Naive thymus-derived CD4-positive, alpha-beta T cell (primary cell): ENCODE measurements at regions of chr9 and their contacts with region 1.

Region 1: DNA sequence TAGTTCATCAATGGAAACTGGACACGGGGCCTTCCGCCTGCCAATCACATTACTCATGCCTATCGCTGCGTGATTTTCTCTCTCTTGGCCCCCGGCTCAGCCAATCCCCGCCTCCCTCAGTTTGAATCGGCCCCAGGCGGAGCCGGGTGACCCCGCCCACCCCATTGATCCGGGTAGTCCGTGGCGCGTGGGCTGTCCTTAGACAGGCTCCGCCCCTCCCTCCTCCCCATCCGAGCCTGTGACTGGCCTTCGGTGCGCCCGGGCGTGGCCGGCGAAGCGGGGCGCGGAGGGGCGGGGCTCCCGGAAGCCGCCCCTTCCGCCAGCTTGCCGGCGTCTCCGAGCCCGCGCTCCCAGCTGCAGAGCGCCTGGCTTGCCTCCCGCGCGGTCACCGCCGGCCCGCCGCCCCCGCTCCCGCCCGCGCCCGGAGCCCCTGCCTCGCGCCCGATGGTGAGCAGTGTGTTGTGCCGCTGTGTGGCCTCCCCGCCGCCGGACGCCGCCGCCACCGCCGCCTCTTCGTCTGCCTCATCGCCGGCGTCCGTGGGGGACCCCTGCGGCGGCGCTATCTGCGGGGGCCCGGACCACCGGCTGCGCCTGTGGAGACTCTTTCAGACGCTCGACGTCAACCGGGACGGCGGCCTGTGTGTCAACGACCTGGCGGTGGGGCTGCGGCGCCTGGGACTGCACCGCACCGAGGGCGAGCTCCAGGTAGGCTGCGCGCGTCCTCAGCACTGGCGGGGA is at the start of gene SLC25A25:
- DNase-seq: peak; percentile 99 to 100 (median 100)
- ATAC-seq: peak; percentile 92
- H3K4me3 ChIP-seq: peak within 1 kb of the TSS; percentile 96
- H3K4me3 Mint-ChIP-seq: peak within 1 kb of the TSS in 8 of 10 donors; percentile 91 to 99 (median 94)
- H3K27ac ChIP-seq: peak within 1 kb of the TSS; percentile 88
- H3K27ac Mint-ChIP-seq: peak within 1 kb of the TSS; percentile 74 to 94 (median 85)
- H3K4me1 ChIP-seq: peaks cover 50 to 54% of the 10 kb centered on the region in 2 donors
- H3K4me1 Mint-ChIP-seq: peaks cover 38 to 69% (median 51%) of the 10 kb centered on the region in 7 donors
- H3K27me3 ChIP-seq: no peaks in the 10 kb centered on the region
- H3K27me3 Mint-ChIP-seq: no peaks in the 10 kb centered on the region
- total RNA-seq, gene SLC25A25: 12.4 to 26.3 (median 15.1) TPM

Region 2: GRCh38 chr9:127770905-127771569 is 297.0 kb before region 1 on chr9:
- CTCF ChIA-PET with region 1: no interaction called
- POLR2A ChIA-PET with region 1: no interaction called
- intact Hi-C with region 1: loop called in 1 of 2 experiments (anchors 5 kb)
- DNase-seq: peak; percentile 85 to 99 (median 92)
- ATAC-seq: peak; percentile 92
- H3K4me3 ChIP-seq: peak overlapping the region; percentile 71
- H3K4me3 Mint-ChIP-seq: peak overlapping the region; percentile 74 to 92 (median 86)
- H3K27ac ChIP-seq: peak overlapping the region; percentile 90
- H3K27ac Mint-ChIP-seq: peak overlapping the region; percentile 90 to 96 (median 94)
- H3K4me1 ChIP-seq: peaks cover 57 to 59% of the 10 kb centered on the region in 2 donors
- H3K4me1 Mint-ChIP-seq: peaks cover 44 to 82% (median 71%) of the 10 kb centered on the region in 7 donors
- H3K27me3 ChIP-seq: no peaks in the 10 kb centered on the region
- H3K27me3 Mint-ChIP-seq: no peaks in the 10 kb centered on the region

Region 3: GRCh38 chr9:128007566-128008138 is 60.4 kb before region 1 on chr9:
- CTCF ChIA-PET with region 1: no interaction called
- POLR2A ChIA-PET with region 1: interaction called, 7 read pairs
- intact Hi-C with region 1: loop called in 1 of 2 experiments (anchors 1 kb)
- DNase-seq: peak; percentile 61 to 97 (median 96)
- ATAC-seq: peak; percentile 95
- H3K4me3 ChIP-seq: peak overlapping the region; percentile 48
- H3K4me3 Mint-ChIP-seq: peak overlapping the region; percentile 76 to 87 (median 86)
- H3K27ac ChIP-seq: peak overlapping the region; percentile 66
- H3K27ac Mint-ChIP-seq: peak overlapping the region; percentile 93 to 100 (median 98)
- H3K4me1 ChIP-seq: peaks cover 39 to 76% of the 10 kb centered on the region in 2 donors
- H3K4me1 Mint-ChIP-seq: peaks cover 28 to 93% (median 65%) of the 10 kb centered on the region in 7 donors
- H3K27me3 ChIP-seq: no peaks in the 10 kb centered on the region
- H3K27me3 Mint-ChIP-seq: peaks cover 0 to 3% (median 0%) of the 10 kb centered on the region in 5 donors

Region 4: DNA sequence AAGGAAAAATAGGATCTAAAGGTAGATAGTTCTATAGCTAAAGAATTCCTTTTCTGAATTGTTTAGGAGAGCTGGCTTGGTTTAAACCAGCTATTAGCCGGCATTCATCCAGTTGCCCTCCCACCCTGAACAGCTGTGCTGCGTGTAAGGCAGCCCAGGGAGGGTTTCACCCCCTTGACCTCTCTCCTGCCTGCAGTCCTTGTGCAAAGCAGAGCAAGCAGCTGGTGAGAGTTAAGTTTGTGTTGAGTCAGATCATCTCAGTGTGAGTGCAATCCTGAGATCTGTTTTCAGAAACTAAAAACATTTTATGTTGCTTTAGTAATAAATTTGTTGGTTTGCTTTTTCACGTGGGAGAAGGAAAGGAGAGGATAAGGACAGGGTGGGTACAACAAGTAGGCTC is 13.0 kb after region 1 on chr9:
- CTCF ChIA-PET with region 1: no interaction called
- POLR2A ChIA-PET with region 1: interaction called, 26 read pairs
- intact Hi-C with region 1: loop called in 1 of 2 experiments (anchors 1 kb)
- DNase-seq: no peak
- ATAC-seq: no peak
- H3K4me3 ChIP-seq: no peak overlapping the region
- H3K4me3 Mint-ChIP-seq: no peak overlapping the region
- H3K27ac ChIP-seq: no peak overlapping the region
- H3K27ac Mint-ChIP-seq: peak overlapping the region in 7 of 9 donors; percentile 36 to 79 (median 71)
- H3K4me1 ChIP-seq: peaks cover 0 to 8% of the 10 kb centered on the region in 2 donors
- H3K4me1 Mint-ChIP-seq: peaks cover 35 to 57% (median 53%) of the 10 kb centered on the region in 7 donors
- H3K27me3 ChIP-seq: no peaks in the 10 kb centered on the region
- H3K27me3 Mint-ChIP-seq: no peaks in the 10 kb centered on the region

Region 5: DNA sequence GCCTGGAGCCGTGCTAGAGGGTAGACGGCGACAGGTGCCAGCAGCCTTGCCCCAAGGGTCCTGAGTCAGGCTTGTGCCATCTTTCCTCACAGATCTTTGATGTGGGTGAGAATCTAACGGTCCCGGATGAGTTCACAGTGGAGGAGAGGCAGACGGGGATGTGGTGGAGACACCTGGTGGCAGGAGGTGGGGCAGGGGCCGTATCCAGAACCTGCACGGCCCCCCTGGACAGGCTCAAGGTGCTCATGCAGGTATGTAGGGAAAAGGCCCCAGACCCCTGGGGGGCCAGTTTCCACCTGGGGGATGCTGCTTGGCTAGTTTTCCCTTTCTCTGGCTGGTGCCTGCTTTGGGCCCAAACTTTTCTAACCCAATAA is 35.5 kb after region 1 on chr9:
- CTCF ChIA-PET with region 1: no interaction called
- POLR2A ChIA-PET with region 1: interaction called, 5 read pairs
- intact Hi-C with region 1: loop called in 1 of 2 experiments (anchors 1 kb)
- DNase-seq: peak in 7 of 9 donors; percentile 27 to 52 (median 50)
- ATAC-seq: peak; percentile 77
- H3K4me3 ChIP-seq: no peak overlapping the region
- H3K4me3 Mint-ChIP-seq: peak overlapping the region in 7 of 10 donors; percentile 5 to 56 (median 36)
- H3K27ac ChIP-seq: peak overlapping the region; percentile 3
- H3K27ac Mint-ChIP-seq: peak overlapping the region in 8 of 9 donors; percentile 60 to 89 (median 74)
- H3K4me1 ChIP-seq: peaks cover 6 to 41% of the 10 kb centered on the region in 2 donors
- H3K4me1 Mint-ChIP-seq: peaks cover 36 to 68% (median 46%) of the 10 kb centered on the region in 7 donors
- H3K27me3 ChIP-seq: no peaks in the 10 kb centered on the region
- H3K27me3 Mint-ChIP-seq: no peaks in the 10 kb centered on the region

Region 6: DNA sequence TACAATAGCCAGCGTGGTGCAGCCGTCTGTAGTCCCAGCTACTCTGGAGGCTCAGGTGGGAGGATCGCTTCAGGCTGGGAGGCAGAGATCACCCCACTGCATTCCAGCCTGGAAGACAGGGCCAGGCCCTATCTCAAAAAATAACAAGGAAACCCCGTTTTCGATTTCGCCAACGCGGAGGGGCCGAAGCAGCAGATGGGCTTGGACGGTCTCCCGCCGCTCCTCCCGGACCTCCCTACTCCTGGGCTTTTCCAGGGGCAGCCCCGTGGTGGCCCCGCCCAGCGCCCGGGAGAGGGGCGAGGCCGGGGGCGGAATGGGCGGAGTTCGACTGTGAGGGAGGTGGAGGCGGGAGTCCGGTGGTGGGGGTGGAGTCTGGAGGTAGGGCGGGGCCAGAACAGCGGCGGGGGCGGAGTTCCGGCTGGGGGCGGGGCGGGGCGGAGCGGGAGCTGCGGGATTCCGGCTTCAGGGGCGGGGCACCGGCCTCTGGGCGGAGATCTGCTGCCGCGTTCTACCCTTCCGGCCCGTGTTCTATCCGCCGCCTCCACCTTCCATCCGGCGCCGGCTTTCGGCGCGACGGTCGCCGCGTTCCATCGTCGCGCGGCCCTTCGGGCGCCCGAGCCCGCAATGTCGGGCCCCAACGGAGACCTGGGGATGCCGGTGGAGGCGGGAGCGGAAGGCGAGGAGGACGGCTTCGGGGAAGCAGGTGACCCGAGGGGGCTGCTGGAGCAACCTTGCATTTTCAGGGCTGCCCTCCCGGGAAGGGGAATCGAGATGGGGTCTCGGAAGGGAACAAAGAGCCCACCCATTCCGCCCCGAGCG is 91.9 kb after region 1 on chr9 and contains the start of gene BBLN:
- CTCF ChIA-PET with region 1: no interaction called
- POLR2A ChIA-PET with region 1: interaction called, 3 read pairs
- intact Hi-C with region 1: loop called in 1 of 2 experiments (anchors 1 kb)
- DNase-seq: peak; percentile 78 to 94 (median 87)
- ATAC-seq: peak; percentile 94
- H3K4me3 ChIP-seq: peak within 1 kb of the TSS; percentile 97
- H3K4me3 Mint-ChIP-seq: peak within 1 kb of the TSS; percentile 79 to 90 (median 82)
- H3K27ac ChIP-seq: peak within 1 kb of the TSS; percentile 78
- H3K27ac Mint-ChIP-seq: peak within 1 kb of the TSS; percentile 84 to 95 (median 93)
- H3K4me1 ChIP-seq: peaks cover 11 to 12% of the 10 kb centered on the region in 2 donors
- H3K4me1 Mint-ChIP-seq: peaks cover 0 to 28% (median 21%) of the 10 kb centered on the region in 7 donors
- H3K27me3 ChIP-seq: no peaks in the 10 kb centered on the region
- H3K27me3 Mint-ChIP-seq: no peaks in the 10 kb centered on the region
- total RNA-seq, gene BBLN: 42.7 to 87.8 (median 48.0) TPM

Region 7: DNA sequence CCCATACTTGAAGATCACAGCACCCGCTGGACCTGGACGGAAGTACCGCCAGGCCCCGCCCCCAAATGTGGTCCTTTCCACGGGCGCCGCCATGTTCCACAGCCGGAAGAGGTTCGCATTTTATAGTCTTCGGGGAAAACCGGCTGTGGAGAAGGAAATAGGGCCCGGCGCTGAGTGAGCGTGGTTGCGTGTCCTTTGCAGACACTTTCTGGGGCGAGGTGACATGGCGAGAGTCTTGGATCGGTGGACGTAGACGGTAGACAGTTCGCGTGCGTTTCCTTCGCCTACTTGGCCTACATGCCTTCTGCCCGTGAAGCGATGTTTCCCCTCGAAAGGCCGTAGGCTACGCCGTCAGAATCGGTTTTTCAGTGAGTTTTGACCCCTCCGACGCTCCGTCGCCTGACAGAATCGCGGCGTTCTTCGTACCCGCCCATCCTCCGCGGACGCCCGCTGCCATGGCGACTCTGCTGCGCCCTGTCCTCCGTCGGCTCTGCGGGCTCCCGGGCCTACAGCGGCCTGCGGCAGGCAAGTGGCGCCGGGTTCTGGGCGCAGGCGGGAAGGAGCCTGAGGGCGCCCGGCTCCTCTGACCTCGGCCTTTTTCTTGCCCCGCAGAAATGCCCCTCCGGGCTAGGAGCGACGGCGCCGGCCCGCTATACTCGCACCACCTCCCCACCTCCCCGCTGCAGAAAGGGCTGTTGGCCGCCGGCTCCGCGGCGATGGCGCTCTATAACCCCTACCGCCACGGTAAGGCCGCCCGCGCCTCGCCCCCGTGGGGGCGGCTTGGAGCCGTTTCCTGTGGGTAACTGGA is 254.6 kb after region 1 on chr9 and contains the starts of genes COQ4 and TRUB2:
- CTCF ChIA-PET with region 1: no interaction called
- POLR2A ChIA-PET with region 1: no interaction called
- intact Hi-C with region 1: loop called in 1 of 2 experiments (anchors 1 kb)
- DNase-seq: peak; percentile 80 to 95 (median 94)
- ATAC-seq: peak; percentile 95
- H3K4me3 ChIP-seq: peak within 1 kb of the TSS; percentile 98
- H3K4me3 Mint-ChIP-seq: peak within 1 kb of the TSS; percentile 82 to 99 (median 96)
- H3K27ac ChIP-seq: peak within 1 kb of the TSS; percentile 85
- H3K27ac Mint-ChIP-seq: peak within 1 kb of the TSS; percentile 95 to 99 (median 98)
- H3K4me1 ChIP-seq: peaks cover 10 to 13% of the 10 kb centered on the region in 2 donors
- H3K4me1 Mint-ChIP-seq: peaks cover 4 to 45% (median 29%) of the 10 kb centered on the region in 7 donors
- H3K27me3 ChIP-seq: no peaks in the 10 kb centered on the region
- H3K27me3 Mint-ChIP-seq: peaks cover 0 to 2% (median 0%) of the 10 kb centered on the region in 5 donors
- total RNA-seq, gene COQ4: 32.9 to 47.2 (median 42.4) TPM
- total RNA-seq, gene TRUB2: 11.5 to 27.2 (median 21.6) TPM